ENCODE measurements at regions of chr15 and their contacts with region 1.

Region 1: DNA sequence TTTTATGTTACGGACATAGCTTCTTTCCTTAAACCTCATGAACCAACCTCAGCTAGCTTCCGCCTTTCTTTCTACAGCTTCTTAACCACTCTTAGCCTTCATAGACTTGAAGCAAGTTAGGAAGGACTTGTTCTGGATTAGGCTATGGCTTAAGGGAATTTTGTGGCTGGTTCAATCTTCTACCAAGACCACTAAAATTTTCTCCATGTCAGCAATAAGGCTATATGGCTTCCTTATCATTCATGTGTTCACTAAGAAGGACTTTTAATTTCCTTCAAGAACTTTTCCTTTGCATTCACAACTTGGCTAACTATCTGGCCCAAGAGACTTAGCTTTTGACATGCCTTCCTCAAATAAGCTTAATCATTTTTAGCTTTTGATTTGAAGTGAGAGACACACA is 24.5 kb downstream of the CCPG1 start:
- DNase-seq: no peak
- ATAC-seq: no peak
- H3K4me3 ChIP-seq: no peak overlapping the region
- H3K4me3 Mint-ChIP-seq: no peak overlapping the region
- H3K27ac ChIP-seq: no peak overlapping the region
- H3K27ac Mint-ChIP-seq: no peak overlapping the region
- H3K4me1 ChIP-seq: no peaks in the 10 kb centered on the region
- H3K4me1 Mint-ChIP-seq: peaks cover 0 to 6% (median 0%) of the 10 kb centered on the region in 3 donors
- H3K27me3 ChIP-seq: no peaks in the 10 kb centered on the region
- H3K27me3 Mint-ChIP-seq: no peaks in the 10 kb centered on the region

Region 2: DNA sequence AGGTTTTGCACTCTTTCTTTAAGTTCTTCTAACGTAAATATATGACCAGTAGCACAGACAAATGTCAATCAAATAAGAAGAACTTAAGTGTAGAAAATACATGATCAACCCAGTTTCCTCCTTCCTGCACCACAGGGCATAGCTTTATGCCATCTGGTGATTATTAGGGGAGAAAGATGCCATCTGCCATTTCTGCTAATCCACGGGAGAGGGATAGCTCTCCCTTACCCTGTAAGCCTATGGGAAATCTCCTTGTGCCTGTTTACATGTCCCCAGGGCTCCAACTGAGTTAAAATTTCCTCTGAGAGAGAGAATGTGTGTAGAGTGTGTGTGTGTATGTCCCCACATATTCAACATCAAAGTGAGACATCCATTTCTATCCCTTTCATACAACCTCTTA is 322.9 kb before region 1 on chr15:
- CTCF ChIA-PET with region 1: interaction called in 1 of 2 experiments, 11 read pairs
- POLR2A ChIA-PET with region 1: no interaction called
- DNase-seq: no peak
- ATAC-seq: no peak
- H3K4me3 ChIP-seq: no peak overlapping the region
- H3K4me3 Mint-ChIP-seq: no peak overlapping the region
- H3K27ac ChIP-seq: no peak overlapping the region
- H3K27ac Mint-ChIP-seq: no peak overlapping the region
- H3K4me1 ChIP-seq: no peaks in the 10 kb centered on the region
- H3K4me1 Mint-ChIP-seq: no peaks in the 10 kb centered on the region
- H3K27me3 ChIP-seq: no peaks in the 10 kb centered on the region
- H3K27me3 Mint-ChIP-seq: peaks cover 13 to 21% of the 10 kb centered on the region in 2 donors

Measured in T-cell (primary cell).